Gastrocnemius medialis (tissue), 4 donors: ENCODE measurements at regions of chr11 and their contacts with region 1.

Region 1: DNA sequence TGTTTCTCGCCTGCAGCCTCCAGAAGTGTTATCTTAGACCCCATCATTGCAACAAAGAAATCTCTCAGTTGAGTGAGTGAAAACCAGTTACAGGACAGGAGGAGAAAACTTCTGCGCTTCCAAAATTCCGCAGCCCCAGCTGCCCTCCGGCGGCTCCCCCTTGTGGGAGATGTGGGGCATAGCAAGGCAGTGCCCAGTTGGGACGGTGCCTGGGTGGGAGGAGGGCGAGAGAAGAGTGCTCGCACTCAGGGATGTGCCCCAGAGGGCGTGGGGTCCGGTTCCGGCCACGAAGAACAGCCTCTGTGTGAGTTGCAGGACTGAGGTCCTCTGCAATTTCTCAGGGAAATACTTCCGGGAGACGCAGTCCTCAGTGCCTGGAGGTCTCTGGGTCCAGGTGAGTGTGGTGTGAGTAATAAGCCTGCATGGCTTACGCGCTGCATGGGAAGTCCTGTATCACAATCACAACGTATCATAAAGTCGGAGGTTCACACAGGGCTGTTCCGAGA is 87.0 kb upstream of the BLID start:
- DNase-seq: peak; percentile 41 to 63
- ATAC-seq: peak; percentile 87 to 90
- H3K4me3 ChIP-seq: peak overlapping the region; percentile 17 to 35 (median 28)
- H3K27ac ChIP-seq: peak overlapping the region in 1 of 4 donors; percentile 22
- H3K4me1 ChIP-seq: peaks cover 10 to 21% of the 10 kb centered on the region in 2 donors
- H3K27me3 ChIP-seq: no peaks in the 10 kb centered on the region
- CTCF ChIP-seq: peak; percentile 88 to 97 (median 93)
- POLR2A ChIP-seq: no peak

Region 2: DNA sequence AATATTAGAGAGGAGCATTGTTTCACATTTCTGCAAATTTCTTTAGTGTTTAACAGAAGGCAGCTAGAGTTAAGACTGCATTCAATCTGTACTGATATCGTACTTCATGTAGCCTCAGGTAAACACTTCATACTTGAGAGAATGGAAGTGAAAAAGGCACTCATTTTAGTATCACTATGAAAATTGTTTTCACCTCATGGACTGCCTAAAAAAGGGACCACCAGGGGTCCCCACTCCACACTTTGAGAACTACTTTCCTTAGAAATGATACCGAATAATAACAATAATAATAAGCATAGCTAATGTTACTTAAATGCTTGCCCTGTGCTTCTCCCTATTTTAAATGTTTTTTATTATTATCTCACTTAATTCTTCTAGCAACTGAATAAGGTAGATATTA is 182.1 kb before region 1 on chr11:
- in situ Hi-C with region 1: no loop called
- intact Hi-C with region 1: loop called (anchors 2 kb)
- DNase-seq: no peak
- ATAC-seq: no peak
- H3K4me3 ChIP-seq: no peak overlapping the region
- H3K27ac ChIP-seq: no peak overlapping the region
- H3K4me1 ChIP-seq: no peaks in the 10 kb centered on the region
- H3K27me3 ChIP-seq: no peaks in the 10 kb centered on the region
- CTCF ChIP-seq: peak in 3 of 5 experiments; percentile 10 to 46 (median 26)
- POLR2A ChIP-seq: no peak

Region 3: GRCh38 chr11:122108192-122108799 is 94.7 kb before region 1 on chr11:
- in situ Hi-C with region 1: loop called in 2 of 4 experiments (anchors 10 kb)
- intact Hi-C with region 1: loop called (anchors 2 kb)
- DNase-seq: no peak
- ATAC-seq: peak in 1 of 2 donors; percentile 32
- H3K4me3 ChIP-seq: no peak overlapping the region
- H3K27ac ChIP-seq: peak overlapping the region; percentile 74 to 90 (median 80)
- H3K4me1 ChIP-seq: peaks cover 5 to 24% of the 10 kb centered on the region in 2 donors
- H3K27me3 ChIP-seq: no peaks in the 10 kb centered on the region
- CTCF ChIP-seq: peak; percentile 15 to 57 (median 37)
- POLR2A ChIP-seq: no peak

Region 4: GRCh38 chr11:122115524-122116379 is 87.3 kb before region 1 on chr11 and contains the start of gene BLID:
- in situ Hi-C with region 1: loop called in 1 of 4 experiments (anchors 10 kb)
- intact Hi-C with region 1: no loop called
- DNase-seq: peak in 1 of 2 donors; percentile 57
- ATAC-seq: peak; percentile 87 to 96
- H3K4me3 ChIP-seq: no peak within 1 kb of the TSS
- H3K27ac ChIP-seq: no peak within 1 kb of the TSS
- H3K4me1 ChIP-seq: peaks cover 11 to 13% of the 10 kb centered on the region in 2 donors
- H3K27me3 ChIP-seq: no peaks in the 10 kb centered on the region
- CTCF ChIP-seq: peak; percentile 18 to 35 (median 27)
- POLR2A ChIP-seq: no peak
- total RNA-seq, gene BLID: 0.66 TPM in 1 of 4 donors, not detected in the others

Region 5: DNA sequence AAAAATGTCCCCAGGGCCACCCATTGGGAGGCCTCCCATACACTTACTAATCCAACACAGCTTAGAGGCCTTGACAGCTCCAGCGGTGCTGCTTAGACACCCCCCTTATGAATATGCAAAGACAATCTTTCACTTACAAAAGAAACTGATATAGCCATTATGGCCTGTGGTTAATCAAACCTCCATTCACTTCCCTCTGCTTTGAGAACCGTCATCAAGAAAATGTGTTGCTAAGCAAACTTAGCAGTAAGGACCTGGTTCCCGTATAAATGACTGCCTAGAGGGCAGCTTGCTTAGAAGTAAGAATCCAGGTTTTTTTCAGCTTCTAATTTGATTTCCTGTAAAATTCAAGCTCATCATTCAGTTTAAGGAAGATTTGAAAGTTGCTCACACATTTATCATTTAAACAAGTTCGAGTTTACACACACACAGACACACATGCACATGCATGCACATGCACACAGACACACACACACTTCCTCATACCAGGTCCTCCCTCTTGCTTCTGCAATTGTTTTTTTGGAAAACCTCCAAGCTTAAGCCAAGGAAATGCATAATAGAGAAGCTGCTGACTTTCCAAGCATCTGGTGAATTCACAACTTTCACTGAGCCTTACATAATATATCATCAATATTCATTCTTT is 50.7 kb after region 1 on chr11:
- in situ Hi-C with region 1: no loop called
- intact Hi-C with region 1: no loop called
- DNase-seq: no peak
- ATAC-seq: no peak
- H3K4me3 ChIP-seq: no peak overlapping the region
- H3K27ac ChIP-seq: no peak overlapping the region
- H3K4me1 ChIP-seq: peaks cover 5 to 33% of the 10 kb centered on the region in 2 donors
- H3K27me3 ChIP-seq: no peaks in the 10 kb centered on the region
- CTCF ChIP-seq: no peak
- POLR2A ChIP-seq: no peak